ENCODE measurements at regions of chr19 and their contacts with region 1.

Region 1: GRCh38 chr19:17303167-17303939 is at the start of gene ABHD8:
- DNase-seq: peak; percentile 95 to 97 (median 97)
- H3K4me3 ChIP-seq: peak within 1 kb of the TSS; percentile 23 to 85 (median 73)
- H3K27ac ChIP-seq: peak within 1 kb of the TSS in 1 of 2 experiments; percentile 75
- H3K4me1 ChIP-seq: peaks cover 8 to 41% (median 32%) of the 10 kb centered on the region in 4 experiments
- H3K27me3 ChIP-seq: no peaks in the 10 kb centered on the region

Region 2: GRCh38 chr19:17103177-17103576 is 200.2 kb before region 1 on chr19:
- CTCF ChIA-PET with region 1: no interaction called
- POLR2A ChIA-PET with region 1: no interaction called
- DNase-seq: peak in 2 of 3 donors; percentile 31 to 38
- H3K4me3 ChIP-seq: no peak overlapping the region
- H3K27ac ChIP-seq: no peak overlapping the region
- H3K4me1 ChIP-seq: peaks cover 0 to 18% (median 11%) of the 10 kb centered on the region in 4 experiments
- H3K27me3 ChIP-seq: no peaks in the 10 kb centered on the region

Region 3: GRCh38 chr19:17334414-17335409 is 31.4 kb after region 1 on chr19 and contains the start of gene ANO8:
- CTCF ChIA-PET with region 1: interaction called, 11 read pairs
- POLR2A ChIA-PET with region 1: no interaction called
- DNase-seq: peak; percentile 98 to 99 (median 99)
- H3K4me3 ChIP-seq: peak within 1 kb of the TSS; percentile 52 to 90 (median 80)
- H3K27ac ChIP-seq: peak within 1 kb of the TSS in 1 of 2 experiments; percentile 38
- H3K4me1 ChIP-seq: peaks cover 0 to 47% (median 42%) of the 10 kb centered on the region in 4 experiments
- H3K27me3 ChIP-seq: peaks cover 0 to 7% (median 0%) of the 10 kb centered on the region in 5 experiments